ENCODE measurements at regions of chr12 and their contacts with region 1.

Region 1: GRCh38 chr12:80472902-80473500 is 29.0 kb downstream of the PTPRQ start:
- DNase-seq: no peak
- ATAC-seq: no peak
- H3K4me3 ChIP-seq: no peak overlapping the region
- H3K27ac ChIP-seq: no peak overlapping the region
- H3K4me1 ChIP-seq: no peaks in the 10 kb centered on the region
- H3K27me3 ChIP-seq: no peaks in the 10 kb centered on the region
- CTCF ChIP-seq: peak in 7 of 9 donors; percentile 28 to 55 (median 38)

Region 2: GRCh38 chr12:80531646-80532045 is 58.6 kb after region 1 on chr12:
- intact Hi-C with region 1: no loop called
- DNase-seq: no peak
- ATAC-seq: no peak
- H3K4me3 ChIP-seq: no peak overlapping the region
- H3K27ac ChIP-seq: no peak overlapping the region
- H3K4me1 ChIP-seq: no peaks in the 10 kb centered on the region
- H3K27me3 ChIP-seq: no peaks in the 10 kb centered on the region
- CTCF ChIP-seq: no peak

Region 3: DNA sequence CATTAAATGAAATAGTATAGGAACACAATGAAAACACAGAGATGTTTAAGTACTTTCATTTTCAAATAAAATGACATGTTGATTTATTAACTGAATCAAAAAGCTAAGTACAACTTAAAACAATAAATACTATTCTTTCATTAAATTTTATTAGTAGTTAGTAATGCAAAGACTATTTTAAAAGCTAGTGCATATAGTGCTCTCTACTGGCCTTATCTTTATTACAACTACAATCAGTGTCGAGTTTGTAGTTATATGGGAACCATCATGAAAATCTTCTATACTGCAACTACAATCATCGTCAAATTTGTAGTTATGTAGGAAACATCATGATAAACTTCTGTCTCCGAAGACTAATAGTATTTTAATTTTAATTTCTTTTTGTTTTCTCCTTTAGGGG is 473.6 kb after region 1 on chr12:
- intact Hi-C with region 1: loop called in 2 of 10 experiments (anchors 5 to 10 kb)
- DNase-seq: no peak
- ATAC-seq: no peak
- H3K4me3 ChIP-seq: no peak overlapping the region
- H3K27ac ChIP-seq: no peak overlapping the region
- H3K4me1 ChIP-seq: peaks cover 0 to 5% (median 0%) of the 10 kb centered on the region in 9 donors
- H3K27me3 ChIP-seq: no peaks in the 10 kb centered on the region
- CTCF ChIP-seq: peak in 6 of 9 donors; percentile 20 to 54 (median 45)

Region 4: GRCh38 chr12:80954857-80955520 is 482.0 kb after region 1 on chr12:
- intact Hi-C with region 1: loop called in 1 of 10 experiments (anchors 10 kb)
- DNase-seq: no peak
- ATAC-seq: no peak
- H3K4me3 ChIP-seq: no peak overlapping the region
- H3K27ac ChIP-seq: no peak overlapping the region
- H3K4me1 ChIP-seq: no peaks in the 10 kb centered on the region
- H3K27me3 ChIP-seq: no peaks in the 10 kb centered on the region
- CTCF ChIP-seq: no peak

Region 5: DNA sequence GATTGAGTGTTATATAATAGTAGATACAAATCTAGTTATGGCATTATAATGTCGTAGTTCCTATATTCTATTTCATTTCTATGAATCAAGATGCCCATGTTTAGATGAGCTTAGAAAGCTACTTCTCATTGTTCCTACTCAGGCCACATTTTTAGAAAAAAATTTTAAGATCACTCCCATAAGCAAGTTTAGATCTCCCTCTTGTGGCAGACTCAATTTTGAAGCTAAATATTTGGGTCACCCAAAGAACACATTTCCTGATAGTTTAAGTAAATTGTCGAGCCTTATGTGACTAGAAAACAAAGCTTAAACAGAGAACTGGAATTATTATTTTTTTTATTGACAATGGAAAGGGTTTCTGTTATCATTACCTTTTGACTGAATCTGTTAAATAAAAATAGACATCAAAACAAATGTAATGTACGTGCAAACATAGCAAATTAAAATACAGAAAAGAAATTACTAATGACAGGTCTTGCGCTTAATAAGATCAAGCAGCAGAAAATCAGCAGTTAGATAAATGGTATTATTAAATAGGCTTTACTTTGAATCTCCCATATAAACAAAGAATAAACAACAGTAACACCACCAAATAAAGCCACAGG is 785.0 kb after region 1 on chr12:
- intact Hi-C with region 1: loop called in 1 of 10 experiments (anchors 5 kb)
- DNase-seq: no peak
- ATAC-seq: no peak
- H3K4me3 ChIP-seq: no peak overlapping the region
- H3K27ac ChIP-seq: no peak overlapping the region
- H3K4me1 ChIP-seq: no peaks in the 10 kb centered on the region
- H3K27me3 ChIP-seq: no peaks in the 10 kb centered on the region
- CTCF ChIP-seq: peak in 7 of 9 donors; percentile 33 to 55 (median 42)